Heart right ventricle (tissue), 16 donors: ENCODE measurements at regions of chr13 and their contacts with region 1.

Region 1: GRCh38 chr13:71801781-71802180 is 65.2 kb downstream of the DACH1 start:
- DNase-seq: no peak
- ATAC-seq: peak in 1 of 8 donors; percentile 42
- H3K4me3 ChIP-seq: no peak overlapping the region
- H3K27ac ChIP-seq: no peak overlapping the region
- H3K4me1 ChIP-seq: peaks cover 0 to 23% (median 0%) of the 10 kb centered on the region in 9 donors
- H3K27me3 ChIP-seq: no peaks in the 10 kb centered on the region
- CTCF ChIP-seq: no peak

Region 2: DNA sequence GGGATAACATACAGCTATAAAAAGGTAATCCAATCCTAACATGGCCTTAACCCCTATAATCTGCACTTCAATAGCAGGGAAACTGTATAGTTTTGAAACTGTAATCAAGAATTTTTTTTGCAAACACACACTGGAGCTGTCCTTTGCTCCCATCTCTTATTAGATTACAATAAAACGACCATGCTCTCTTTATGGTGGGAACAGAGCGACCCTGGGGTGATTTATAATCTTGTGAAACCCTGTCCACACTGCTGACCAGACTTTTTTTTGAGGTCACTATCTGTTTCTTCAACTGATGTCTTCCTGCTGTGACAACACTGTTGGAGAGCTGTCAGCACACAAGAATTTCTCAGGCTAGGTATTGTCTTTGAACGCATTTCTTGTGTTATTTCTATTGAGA is 29.9 kb after region 1 on chr13:
- intact Hi-C with region 1: loop called in 1 of 10 experiments (anchors 5 kb)
- DNase-seq: no peak
- ATAC-seq: no peak
- H3K4me3 ChIP-seq: no peak overlapping the region
- H3K27ac ChIP-seq: no peak overlapping the region
- H3K4me1 ChIP-seq: peaks cover 0 to 8% (median 0%) of the 10 kb centered on the region in 9 donors
- H3K27me3 ChIP-seq: no peaks in the 10 kb centered on the region
- CTCF ChIP-seq: no peak

Region 3: DNA sequence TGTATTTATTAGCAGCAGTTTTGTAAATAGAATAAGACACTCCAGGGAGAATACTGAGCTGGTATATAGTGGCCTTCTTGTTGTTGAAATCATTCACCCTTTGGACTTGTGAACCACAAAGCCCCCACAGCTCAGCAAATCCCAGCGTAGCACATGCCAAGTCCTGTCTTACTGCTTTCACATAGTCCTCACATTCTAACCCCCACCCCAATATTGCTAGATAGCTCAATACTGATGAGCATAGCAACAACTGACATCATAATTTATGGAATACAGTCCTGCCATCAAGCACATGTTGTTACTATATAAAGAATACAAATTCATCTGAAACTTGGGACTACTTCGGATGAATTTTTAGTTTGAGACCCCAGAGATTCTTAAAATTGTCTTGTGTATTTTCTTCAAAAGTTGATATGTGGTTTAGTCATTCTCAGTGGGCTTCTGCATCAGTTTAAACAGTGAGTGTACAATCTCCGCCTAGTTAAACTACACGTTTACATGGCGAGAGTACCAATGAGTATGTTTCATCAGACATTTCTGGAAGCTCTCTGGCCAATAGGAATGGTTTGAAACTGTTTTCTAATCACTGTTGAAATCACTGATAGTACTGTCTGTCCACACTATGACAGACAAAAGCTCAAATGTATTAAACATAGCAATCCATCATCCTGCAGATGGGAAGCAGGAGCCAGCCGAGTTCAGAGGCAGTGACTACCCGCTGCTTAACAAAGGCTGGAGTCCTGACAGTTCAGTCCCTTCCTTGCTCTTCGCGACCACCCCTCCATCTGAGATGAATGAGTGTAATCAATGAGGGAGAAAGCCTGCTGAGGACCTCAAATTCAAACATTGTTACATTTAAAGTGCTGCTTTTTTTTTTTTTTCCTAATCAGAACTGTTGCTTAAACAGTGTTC is 50.0 kb after region 1 on chr13:
- intact Hi-C with region 1: loop called in 1 of 10 experiments (anchors 10 kb)
- DNase-seq: no peak
- ATAC-seq: no peak
- H3K4me3 ChIP-seq: no peak overlapping the region
- H3K27ac ChIP-seq: no peak overlapping the region
- H3K4me1 ChIP-seq: peaks cover 0 to 7% (median 0%) of the 10 kb centered on the region in 9 donors
- H3K27me3 ChIP-seq: no peaks in the 10 kb centered on the region
- CTCF ChIP-seq: no peak